AG04450 (cell line): ENCODE measurements at regions of chr11 and their contacts with region 1.

Region 1: DNA sequence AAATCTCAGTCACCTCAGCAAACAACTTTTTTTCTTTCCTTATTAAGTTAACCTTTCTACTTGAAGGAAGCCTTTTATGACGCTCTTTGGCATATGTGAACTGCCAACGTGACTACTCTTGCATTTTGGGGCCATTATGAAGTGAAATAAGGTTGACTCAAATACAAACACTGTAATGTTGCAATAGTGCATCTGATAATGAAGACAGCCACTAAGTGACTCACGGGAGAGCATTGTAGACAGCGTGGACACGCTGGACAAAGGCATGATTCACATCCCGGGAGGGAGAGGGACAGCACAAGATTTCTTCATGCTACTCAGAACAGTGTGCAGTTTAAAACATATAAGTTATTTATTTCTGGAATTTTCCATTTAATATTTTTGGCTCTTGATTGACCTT is 560.8 kb downstream of the ETS1 start:
- DNase-seq: peak; percentile 76
- H3K4me3 ChIP-seq: no peak overlapping the region
- H3K27ac ChIP-seq: no peak overlapping the region
- H3K27me3 ChIP-seq: no peaks in the 10 kb centered on the region
- CTCF ChIP-seq: no peak

Region 2: GRCh38 chr11:128586689-128587088 is 560.1 kb after region 1 on chr11:
- CTCF ChIA-PET with region 1: no interaction called
- POLR2A ChIA-PET with region 1: interaction called, 11 read pairs
- DNase-seq: no peak
- H3K4me3 ChIP-seq: no peak overlapping the region
- H3K27ac ChIP-seq: no peak overlapping the region
- H3K27me3 ChIP-seq: no peaks in the 10 kb centered on the region
- CTCF ChIP-seq: no peak